ENCODE measurements at regions of chr20 and their contacts with region 1.

Region 1: GRCh38 chr20:48722737-48723191 is 105.0 kb downstream of the PREX1 start:
- DNase-seq: peak; percentile 36 to 93
- H3K4me3 ChIP-seq: peak overlapping the region in 1 of 2 donors; percentile 39
- H3K27ac ChIP-seq: peak overlapping the region; percentile 90 to 97
- H3K4me1 ChIP-seq: peaks cover 27 to 69% of the 10 kb centered on the region in 2 donors
- H3K27me3 ChIP-seq: no peaks in the 10 kb centered on the region
- CTCF ChIP-seq: peak; percentile 26 to 38 (median 31)

Region 2: DNA sequence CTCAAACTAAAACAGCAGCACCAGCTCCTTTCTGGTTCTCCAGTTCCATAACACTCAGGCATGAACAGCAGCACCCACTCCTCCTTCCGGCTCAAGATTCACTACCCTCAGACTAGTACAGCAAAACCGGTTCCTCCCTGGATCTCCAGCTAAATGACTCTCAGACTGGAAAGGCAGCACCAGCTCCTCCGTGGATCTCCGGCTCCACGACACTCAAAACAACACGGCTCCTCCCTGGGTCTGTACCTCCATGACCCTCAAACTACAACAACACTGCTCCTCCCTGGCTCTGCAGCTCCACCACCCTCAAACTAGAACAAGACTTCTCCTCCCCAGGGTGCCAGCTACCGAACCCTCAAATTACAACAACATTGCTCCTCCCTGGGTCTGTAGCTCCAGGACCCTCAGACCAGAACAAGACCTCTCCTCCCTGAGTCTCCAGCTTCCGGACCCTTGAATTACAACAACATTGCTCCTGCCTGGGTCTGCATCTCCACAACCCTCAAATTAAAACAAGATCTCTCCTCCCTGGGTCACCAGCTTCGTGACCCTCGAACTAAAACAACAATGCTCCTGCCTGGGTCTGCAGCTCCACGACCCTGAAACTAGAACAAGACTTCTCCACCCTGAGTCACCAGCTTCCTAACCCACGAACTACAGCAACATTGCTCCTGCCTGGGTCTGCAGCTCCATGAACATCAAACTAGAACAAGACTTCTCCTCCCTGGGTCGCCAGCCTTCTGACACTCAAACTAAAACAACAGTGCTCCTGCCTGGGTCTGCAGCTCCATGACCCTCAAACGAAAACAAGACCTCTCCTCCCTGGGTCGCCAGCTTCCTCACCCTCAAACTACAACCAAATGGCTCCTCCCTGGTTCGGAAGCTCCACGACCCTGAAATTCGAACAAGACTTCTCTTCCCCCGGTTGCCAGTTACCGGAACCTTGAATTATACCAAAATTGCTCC is 219.6 kb before region 1 on chr20:
- intact Hi-C with region 1: no loop called
- DNase-seq: peak in 1 of 2 donors; percentile 43
- H3K4me3 ChIP-seq: no peak overlapping the region
- H3K27ac ChIP-seq: no peak overlapping the region
- H3K4me1 ChIP-seq: no peaks in the 10 kb centered on the region
- H3K27me3 ChIP-seq: no peaks in the 10 kb centered on the region
- CTCF ChIP-seq: no peak

Region 3: GRCh38 chr20:48682529-48683251 is 40.1 kb before region 1 on chr20:
- intact Hi-C with region 1: loop called (anchors 1 kb)
- DNase-seq: peak in 1 of 2 donors; percentile 92
- H3K4me3 ChIP-seq: peak overlapping the region; percentile 14 to 43
- H3K27ac ChIP-seq: peak overlapping the region; percentile 61 to 77
- H3K4me1 ChIP-seq: peaks cover 24 to 47% of the 10 kb centered on the region in 2 donors
- H3K27me3 ChIP-seq: no peaks in the 10 kb centered on the region
- CTCF ChIP-seq: no peak

Region 4: GRCh38 chr20:48738399-48739304 is 15.9 kb after region 1 on chr20:
- intact Hi-C with region 1: no loop called
- DNase-seq: no peak
- H3K4me3 ChIP-seq: no peak overlapping the region
- H3K27ac ChIP-seq: peak overlapping the region; percentile 50 to 66
- H3K4me1 ChIP-seq: peaks cover 11 to 27% of the 10 kb centered on the region in 2 donors
- H3K27me3 ChIP-seq: no peaks in the 10 kb centered on the region
- CTCF ChIP-seq: no peak

Region 5: GRCh38 chr20:48787861-48788375 is 65.2 kb after region 1 on chr20:
- intact Hi-C with region 1: loop called (anchors 5 kb)
- DNase-seq: no peak
- H3K4me3 ChIP-seq: no peak overlapping the region
- H3K27ac ChIP-seq: no peak overlapping the region
- H3K4me1 ChIP-seq: peaks cover 18 to 34% of the 10 kb centered on the region in 2 donors
- H3K27me3 ChIP-seq: no peaks in the 10 kb centered on the region
- CTCF ChIP-seq: no peak

Region 6: DNA sequence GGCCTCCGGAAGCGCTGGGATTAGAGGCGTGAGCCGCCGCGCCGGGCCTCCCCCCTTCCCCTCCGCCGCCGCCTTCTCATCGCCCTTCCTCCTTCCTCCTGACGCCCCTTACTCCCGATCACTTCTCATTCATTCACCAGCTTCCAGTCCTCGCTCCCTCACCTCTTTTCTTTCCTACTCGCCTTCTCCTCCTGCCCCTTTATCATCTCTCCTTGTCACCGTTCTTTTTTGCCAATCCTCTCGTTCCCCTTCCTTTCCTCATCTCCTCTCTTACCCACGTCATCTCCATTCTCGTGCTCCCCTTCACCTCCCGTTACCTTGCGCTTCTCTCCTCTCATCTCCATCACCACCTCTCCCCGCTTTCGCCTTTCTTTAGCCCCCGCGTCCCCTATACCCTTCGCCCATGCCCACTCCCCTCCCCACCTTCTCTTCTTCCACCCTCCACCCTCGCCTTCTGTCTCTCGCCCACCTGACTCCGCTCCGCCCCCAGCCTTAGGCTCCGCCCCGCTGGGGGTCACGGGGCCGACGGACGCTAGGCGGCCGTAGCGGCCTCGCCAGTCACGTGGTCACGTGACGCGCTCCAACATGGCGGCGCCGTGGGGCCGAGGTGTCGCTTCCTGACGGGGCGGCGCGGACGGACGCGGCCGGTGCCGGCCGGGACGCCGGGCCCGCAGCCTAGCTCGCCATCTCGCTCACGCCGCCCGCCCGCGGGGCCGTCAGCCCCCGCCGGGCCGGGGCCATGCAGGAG is 198.6 kb after region 1 on chr20 and contains the start of gene ARFGEF2:
- intact Hi-C with region 1: loop called (anchors 5 kb)
- DNase-seq: peak; percentile 73 to 95
- H3K4me3 ChIP-seq: peak within 1 kb of the TSS; percentile 91 to 99
- H3K27ac ChIP-seq: peak within 1 kb of the TSS; percentile 89 to 96
- H3K4me1 ChIP-seq: peaks cover 12 to 28% of the 10 kb centered on the region in 2 donors
- H3K27me3 ChIP-seq: no peaks in the 10 kb centered on the region
- CTCF ChIP-seq: peak in 2 of 3 experiments; percentile 13 to 36
- total RNA-seq, gene ARFGEF2: 7.9 TPM